Right lobe of liver (tissue), 6 donors: ENCODE measurements at regions of chr1 and their contacts with region 1.

Region 1: DNA sequence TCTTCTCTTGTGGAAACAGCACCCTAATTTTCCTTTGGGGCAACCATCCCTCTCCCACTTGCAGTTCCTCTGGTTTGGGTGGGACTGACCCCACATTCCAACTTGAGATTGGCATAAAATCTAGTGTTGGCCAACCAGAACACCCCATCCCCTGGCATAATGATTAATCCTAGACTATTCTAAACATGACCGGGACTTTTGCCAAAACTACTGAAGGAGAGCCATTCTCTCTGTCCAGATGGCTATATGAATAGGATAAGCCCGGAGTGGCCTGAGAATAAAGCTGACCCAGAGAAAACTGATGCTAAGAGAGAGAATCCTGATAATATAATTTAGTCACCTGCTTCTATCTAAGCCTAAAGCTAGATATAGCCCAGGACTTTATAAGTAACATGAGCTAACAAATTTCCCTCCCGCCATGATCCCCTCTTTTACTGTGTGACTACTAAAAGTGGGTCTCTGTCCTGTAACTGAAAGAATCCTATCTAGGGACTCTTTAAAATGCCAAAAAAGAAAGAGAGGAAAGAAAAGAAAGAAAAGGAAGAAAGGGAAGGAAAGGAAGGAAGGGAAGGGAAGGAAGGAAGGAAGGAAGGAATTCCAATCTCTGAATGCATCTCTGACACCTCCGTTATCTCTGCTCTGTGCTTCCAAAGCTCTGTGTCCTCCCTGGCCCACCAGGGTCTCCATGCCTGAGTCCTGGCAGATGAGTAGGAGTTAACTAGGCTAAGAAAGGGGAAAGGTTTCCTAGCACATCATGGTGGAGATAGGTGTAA is 28.0 kb upstream of the NRDC start:
- DNase-seq: no peak
- ATAC-seq: no peak
- H3K4me3 ChIP-seq: no peak overlapping the region
- H3K27ac ChIP-seq: no peak overlapping the region
- H3K4me1 ChIP-seq: no peaks in the 10 kb centered on the region
- H3K27me3 ChIP-seq: no peaks in the 10 kb centered on the region
- CTCF ChIP-seq: no peak
- POLR2A ChIP-seq: no peak

Region 2: GRCh38 chr1:51679435-51679834 is 227.1 kb before region 1 on chr1:
- intact Hi-C with region 1: no loop called
- DNase-seq: no peak
- ATAC-seq: peak in 1 of 4 donors; percentile 52
- H3K4me3 ChIP-seq: no peak overlapping the region
- H3K27ac ChIP-seq: no peak overlapping the region
- H3K4me1 ChIP-seq: peaks cover 0 to 3% (median under 1%) of the 10 kb centered on the region in 4 donors
- H3K27me3 ChIP-seq: no peaks in the 10 kb centered on the region
- CTCF ChIP-seq: no peak
- POLR2A ChIP-seq: no peak

Region 3: DNA sequence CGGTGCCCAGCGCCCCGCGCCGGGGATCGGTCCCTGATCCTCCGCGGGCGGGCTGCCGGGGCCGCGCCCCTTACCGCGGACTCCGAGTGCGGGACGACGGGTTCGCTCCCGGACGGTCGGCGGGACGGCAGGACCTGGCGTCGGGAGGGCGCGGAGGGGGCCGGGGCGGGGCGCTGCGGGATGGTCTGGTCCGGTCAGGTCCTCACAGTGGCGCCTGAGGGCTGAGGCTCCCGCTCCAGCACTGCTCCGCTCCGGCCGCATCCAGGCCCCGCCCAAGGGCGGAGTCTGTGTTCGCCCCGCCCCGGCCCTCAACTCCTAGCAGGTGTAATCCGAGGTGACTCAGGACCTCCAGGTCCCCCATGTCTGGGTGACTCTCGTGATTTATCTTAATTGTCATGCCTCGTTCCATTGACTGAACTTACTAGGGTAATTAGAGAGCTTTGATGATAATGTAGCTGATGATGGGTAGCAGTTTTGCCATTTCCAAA is 84.0 kb after region 1 on chr1 and contains the start of gene RAB3B:
- intact Hi-C with region 1: loop called in 1 of 2 experiments (anchors 10 kb)
- DNase-seq: peak; percentile 55 to 81 (median 69)
- ATAC-seq: peak; percentile 91 to 99 (median 92)
- H3K4me3 ChIP-seq: peak within 1 kb of the TSS; percentile 23 to 58 (median 54)
- H3K27ac ChIP-seq: no peak within 1 kb of the TSS
- H3K4me1 ChIP-seq: no peaks in the 10 kb centered on the region
- H3K27me3 ChIP-seq: no peaks in the 10 kb centered on the region
- CTCF ChIP-seq: no peak
- POLR2A ChIP-seq: peak; percentile 18
- total RNA-seq, gene RAB3B: 0.05 to 9.7 (median 4.4) TPM

Region 4: DNA sequence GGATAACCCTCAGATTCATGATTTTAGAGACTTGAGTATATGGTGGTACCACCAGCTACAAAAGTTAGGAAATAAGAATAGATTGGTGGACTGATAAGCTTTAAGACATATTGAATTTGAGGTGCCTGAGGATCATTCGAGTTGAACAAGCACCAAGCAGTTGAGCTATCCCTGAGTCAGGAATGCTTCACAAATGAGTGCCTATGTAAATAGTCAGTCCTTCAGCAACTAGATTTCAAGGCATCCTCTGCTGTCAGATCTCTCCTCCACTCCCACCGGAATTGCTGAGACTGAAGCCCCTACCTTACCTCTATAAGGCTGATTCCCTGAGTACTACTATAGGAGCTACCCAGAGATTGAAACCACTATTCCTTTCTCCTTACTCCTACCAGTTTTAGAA is 156.7 kb after region 1 on chr1:
- intact Hi-C with region 1: no loop called
- DNase-seq: no peak
- ATAC-seq: no peak
- H3K4me3 ChIP-seq: no peak overlapping the region
- H3K27ac ChIP-seq: no peak overlapping the region
- H3K4me1 ChIP-seq: no peaks in the 10 kb centered on the region
- H3K27me3 ChIP-seq: no peaks in the 10 kb centered on the region
- CTCF ChIP-seq: no peak
- POLR2A ChIP-seq: no peak